HepG2 (cell line): ENCODE measurements at regions of chr22 and their contacts with region 1.

Region 1: DNA sequence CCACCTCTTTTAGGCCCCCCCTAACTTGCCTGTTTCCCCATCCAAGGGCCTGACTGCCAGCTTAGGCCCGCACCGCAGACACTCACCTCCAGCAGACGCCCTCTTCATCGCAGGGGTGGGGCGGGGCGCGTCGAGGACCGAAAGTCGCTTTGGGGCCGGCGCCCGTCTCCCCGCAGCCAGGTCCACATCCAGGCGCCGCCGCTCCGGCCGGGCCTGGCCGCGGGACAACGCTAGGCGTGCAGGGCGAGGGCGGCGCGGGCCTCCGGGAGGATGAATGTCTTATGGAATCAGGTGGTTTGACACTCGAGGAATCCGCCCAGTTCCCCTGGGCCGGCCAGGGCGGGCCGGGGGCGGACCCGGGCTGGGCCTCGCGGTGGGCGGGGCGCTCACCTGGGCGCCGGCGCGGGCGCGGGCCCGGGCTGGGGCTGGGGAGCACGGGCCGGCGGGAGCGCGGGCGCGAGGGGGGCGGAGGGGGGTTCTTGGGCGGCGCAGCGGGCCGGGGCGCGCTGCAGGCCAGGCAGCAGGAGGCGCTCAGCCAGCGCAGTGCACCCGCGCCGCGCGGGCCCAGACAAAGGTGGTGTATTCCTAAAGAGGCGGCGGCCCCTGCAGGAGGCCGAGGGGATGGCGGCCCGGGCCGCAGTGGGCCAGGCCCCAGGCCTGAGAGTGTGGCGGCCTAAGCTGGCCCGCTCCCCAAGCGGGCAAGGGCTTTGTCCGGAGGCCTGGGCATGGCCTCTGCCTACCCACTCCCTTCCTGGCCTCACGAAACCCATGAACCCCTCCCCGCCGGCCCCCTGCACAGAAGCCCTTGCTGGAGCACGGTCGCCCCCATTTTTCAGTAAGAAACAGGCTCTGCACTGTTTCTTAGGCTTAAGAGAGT is 177.6 kb downstream of the IGLL1 start:
- DNase-seq: peak; percentile 67
- ATAC-seq: peak; percentile 88
- H3K4me3 ChIP-seq: peak overlapping the region in 2 of 3 experiments; percentile 47 to 58; a peak in 3 of 6 replicates
- H3K27ac ChIP-seq: no peak overlapping the region
- H3K4me1 ChIP-seq: peaks cover 9% of the 10 kb centered on the region
- H3K27me3 ChIP-seq: peaks cover 4% of the 10 kb centered on the region in 2 experiments; a peak in 4 of 5 replicates
- CTCF ChIP-seq: peak; percentile 75
- EP300 ChIP-seq: no peak
- POLR2A ChIP-seq: no peak
- RAD21 ChIP-seq: peak; percentile 92

Region 2: DNA sequence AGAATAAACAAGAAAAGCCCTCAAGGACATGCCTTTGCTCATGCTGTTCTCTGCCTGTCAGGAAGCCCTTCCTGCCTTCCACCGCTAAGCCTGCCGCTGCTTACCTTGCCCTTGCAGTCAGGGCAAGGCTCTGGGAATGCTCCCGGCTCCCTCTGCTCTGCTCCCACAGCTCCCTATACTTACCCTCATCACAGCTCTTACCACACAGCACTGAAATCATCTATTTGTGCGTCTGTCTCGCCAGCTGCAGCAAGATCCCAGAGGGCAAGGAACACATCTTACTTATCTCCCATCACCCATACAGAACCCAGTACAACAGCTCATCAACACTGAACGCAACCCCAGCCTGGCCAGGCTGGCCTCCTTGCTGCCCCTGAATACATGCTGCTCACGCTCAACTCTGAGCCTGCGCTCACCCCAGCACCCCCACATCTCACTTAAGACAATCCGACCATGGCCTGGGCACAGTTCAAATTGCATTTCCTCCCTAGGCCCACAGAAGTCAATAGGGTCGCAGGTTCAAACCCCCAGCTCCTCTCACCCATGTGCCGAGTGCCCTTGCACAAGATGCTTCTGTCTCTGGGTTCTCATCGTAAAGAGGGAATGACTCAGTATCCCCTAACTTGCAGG is 15.8 kb after region 1 on chr22:
- CTCF ChIA-PET with region 1: no interaction called
- POLR2A ChIA-PET with region 1: no interaction called
- in situ Hi-C with region 1: no loop called
- intact Hi-C with region 1: loop called (anchors 1 kb)
- DNase-seq: no peak
- ATAC-seq: no peak; the same call in 2 of the 3 replicates
- H3K4me3 ChIP-seq: no peak overlapping the region
- H3K27ac ChIP-seq: no peak overlapping the region
- H3K4me1 ChIP-seq: peaks cover 7% of the 10 kb centered on the region; the same call in 1 of the 2 replicates
- H3K27me3 ChIP-seq: peaks cover 4 to 42% of the 10 kb centered on the region in 2 experiments; a peak in 2 of 5 replicates
- CTCF ChIP-seq: no peak
- EP300 ChIP-seq: no peak
- POLR2A ChIP-seq: no peak
- RAD21 ChIP-seq: no peak

Region 3: DNA sequence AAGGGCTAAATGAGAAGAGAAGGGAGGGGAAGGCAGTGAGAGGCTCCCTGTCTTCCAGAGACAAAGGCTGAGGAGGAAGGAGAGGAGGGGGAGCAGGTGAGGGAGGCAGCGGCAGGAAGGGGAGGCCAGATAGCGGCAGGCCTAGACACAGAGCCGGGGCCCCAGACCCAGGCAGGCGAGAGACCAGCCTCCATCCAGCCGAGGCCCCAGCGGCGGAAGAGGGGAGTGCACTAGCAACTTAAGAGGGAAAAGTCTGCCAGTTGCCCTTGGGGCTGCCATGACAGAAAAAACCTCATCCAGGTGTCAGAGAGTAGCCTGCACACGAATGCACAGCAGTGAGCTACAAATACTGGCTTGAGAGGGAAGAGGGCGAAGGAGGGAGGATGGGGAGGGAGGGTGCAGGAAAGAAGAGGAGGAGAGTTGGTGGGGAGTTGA is 130.8 kb after region 1 on chr22:
- CTCF ChIA-PET with region 1: no interaction called
- POLR2A ChIA-PET with region 1: no interaction called
- in situ Hi-C with region 1: no loop called
- intact Hi-C with region 1: no loop called
- DNase-seq: peak; percentile 59
- ATAC-seq: peak; percentile 76
- H3K4me3 ChIP-seq: no peak overlapping the region
- H3K27ac ChIP-seq: peak overlapping the region; percentile 17
- H3K4me1 ChIP-seq: peaks cover 87% of the 10 kb centered on the region
- H3K27me3 ChIP-seq: no peaks in the 10 kb centered on the region
- CTCF ChIP-seq: peak; percentile 55
- EP300 ChIP-seq: no peak
- POLR2A ChIP-seq: no peak
- RAD21 ChIP-seq: 0 out of 2 replicates have a peak, but pooled peaks have one; percentile 32